HepG2 (cell line): ENCODE measurements at regions of chr10 and their contacts with region 1.

Region 1: GRCh38 chr10:52779541-52780390 is 7.2 kb upstream of the MBL2 start:
- DNase-seq: peak; percentile 64
- ATAC-seq: peak; percentile 80
- H3K4me3 ChIP-seq: peak overlapping the region in 1 of 3 experiments; percentile 31; a peak in 1 of 6 replicates
- H3K27ac ChIP-seq: no peak overlapping the region
- H3K4me1 ChIP-seq: peaks cover 51% of the 10 kb centered on the region
- H3K27me3 ChIP-seq: no peaks in the 10 kb centered on the region
- CTCF ChIP-seq: peak; percentile 97
- EP300 ChIP-seq: no peak
- POLR2A ChIP-seq: no peak
- RAD21 ChIP-seq: peak; percentile 99

Region 2: DNA sequence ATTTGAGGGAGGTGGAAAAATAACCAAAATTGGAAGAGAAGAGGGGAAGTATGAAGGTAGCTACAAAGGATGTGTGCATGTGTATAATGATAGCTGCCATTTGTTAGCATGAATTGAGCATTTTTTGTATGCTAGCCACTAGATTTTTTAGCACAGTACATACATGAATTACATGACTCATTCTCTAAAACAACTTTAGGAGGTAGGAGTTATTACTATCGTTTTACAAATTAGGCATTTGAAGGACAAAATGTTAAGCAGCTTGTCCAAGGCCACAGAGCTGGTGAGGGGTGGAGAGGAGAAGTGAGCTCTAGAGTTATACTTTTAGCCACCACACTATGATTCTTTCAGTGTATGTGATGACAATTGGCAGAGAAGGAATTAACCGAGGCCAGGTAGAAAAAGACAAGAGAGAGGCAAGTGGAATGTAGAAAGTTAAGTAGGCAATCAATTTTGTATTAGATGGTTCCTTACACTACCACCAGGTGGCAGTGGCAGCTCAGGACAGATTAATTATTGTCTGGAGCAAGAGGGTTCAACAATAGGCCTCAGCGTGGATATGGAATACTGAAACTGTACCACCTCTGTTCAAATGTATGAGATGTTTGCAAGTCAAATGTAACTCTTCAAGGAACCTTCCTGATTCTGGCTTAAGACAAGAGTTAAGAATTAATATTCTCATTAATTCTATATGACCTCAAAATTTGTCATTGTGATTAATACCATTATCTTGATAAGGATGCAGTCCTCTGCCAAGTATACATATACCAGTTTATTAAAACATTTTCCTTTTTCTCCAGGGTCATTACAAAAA is 135.2 kb before region 1 on chr10:
- CTCF ChIA-PET with region 1: interaction called, 39 read pairs
- POLR2A ChIA-PET with region 1: no interaction called
- in situ Hi-C with region 1: loop called (anchors 5 kb)
- intact Hi-C with region 1: loop called (anchors 1 kb)
- DNase-seq: peak; percentile 48
- ATAC-seq: peak; percentile 78
- H3K4me3 ChIP-seq: no peak overlapping the region
- H3K27ac ChIP-seq: no peak overlapping the region
- H3K4me1 ChIP-seq: peaks cover 23% of the 10 kb centered on the region
- H3K27me3 ChIP-seq: no peaks in the 10 kb centered on the region
- CTCF ChIP-seq: peak; percentile 79
- EP300 ChIP-seq: no peak
- POLR2A ChIP-seq: no peak
- RAD21 ChIP-seq: peak; percentile 70

Region 3: GRCh38 chr10:52740913-52741675 is 38.7 kb before region 1 on chr10:
- CTCF ChIA-PET with region 1: interaction called, 218 read pairs
- POLR2A ChIA-PET with region 1: interaction called, 29 read pairs
- in situ Hi-C with region 1: loop called (anchors 5 kb)
- intact Hi-C with region 1: loop called (anchors 1 kb)
- DNase-seq: peak; percentile 66
- ATAC-seq: peak; percentile 93
- H3K4me3 ChIP-seq: no peak overlapping the region
- H3K27ac ChIP-seq: peak overlapping the region; percentile 11
- H3K4me1 ChIP-seq: peaks cover 31% of the 10 kb centered on the region
- H3K27me3 ChIP-seq: no peaks in the 10 kb centered on the region
- CTCF ChIP-seq: peak; percentile 96
- EP300 ChIP-seq: 0 out of 4 replicates have a peak, but pooled peaks of 1 of the 2 experiments have one; percentile 10
- POLR2A ChIP-seq: no peak
- RAD21 ChIP-seq: peak; percentile 98

Region 4: DNA sequence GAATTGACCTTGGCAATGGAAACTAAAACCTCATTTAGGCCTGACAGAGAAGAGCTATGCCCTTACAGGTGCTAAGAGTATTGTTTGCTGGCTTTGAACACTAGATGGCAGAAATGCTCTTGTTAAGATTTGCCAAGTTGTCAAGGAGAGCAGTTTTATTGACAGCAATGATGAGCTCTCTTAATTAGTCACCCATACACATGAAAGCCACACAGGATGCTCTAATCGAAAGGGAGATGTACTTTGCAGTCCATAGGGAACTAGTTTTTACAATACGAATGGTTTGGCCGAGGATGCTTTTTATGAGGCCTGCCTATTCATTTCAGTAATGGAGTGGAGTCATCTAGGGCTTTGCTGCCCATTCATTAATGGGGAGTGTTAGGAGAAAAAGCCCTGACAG is 38.3 kb after region 1 on chr10:
- CTCF ChIA-PET with region 1: no interaction called
- POLR2A ChIA-PET with region 1: no interaction called
- in situ Hi-C with region 1: no loop called
- intact Hi-C with region 1: no loop called
- DNase-seq: peak; percentile 51
- ATAC-seq: peak; percentile 85
- H3K4me3 ChIP-seq: no peak overlapping the region
- H3K27ac ChIP-seq: no peak overlapping the region
- H3K4me1 ChIP-seq: no peaks in the 10 kb centered on the region
- H3K27me3 ChIP-seq: no peaks in the 10 kb centered on the region
- CTCF ChIP-seq: peak; percentile 70
- EP300 ChIP-seq: no peak
- POLR2A ChIP-seq: no peak
- RAD21 ChIP-seq: no peak